PC-3 (cell line): ENCODE measurements at regions of chr5 and their contacts with region 1.

Region 1: GRCh38 chr5:12016159-12016746 is 112.0 kb upstream of the CTNND2 start:
- DNase-seq: peak; percentile 47
- ATAC-seq: peak; percentile 67
- H3K4me3 ChIP-seq: no peak overlapping the region
- H3K27ac ChIP-seq: no peak overlapping the region
- H3K4me1 ChIP-seq: no peaks in the 10 kb centered on the region
- H3K27me3 ChIP-seq: no peaks in the 10 kb centered on the region
- CTCF ChIP-seq: no peak

Region 2: GRCh38 chr5:11153670-11154377 is 862.4 kb before region 1 on chr5:
- CTCF ChIA-PET with region 1: no interaction called
- POLR2A ChIA-PET with region 1: no interaction called
- intact Hi-C with region 1: no loop called
- DNase-seq: no peak
- ATAC-seq: no peak
- H3K4me3 ChIP-seq: no peak overlapping the region
- H3K27ac ChIP-seq: no peak overlapping the region
- H3K4me1 ChIP-seq: no peaks in the 10 kb centered on the region
- H3K27me3 ChIP-seq: peaks cover 41% of the 10 kb centered on the region
- CTCF ChIP-seq: no peak

Region 3: GRCh38 chr5:11757661-11758060 is 258.6 kb before region 1 on chr5:
- CTCF ChIA-PET with region 1: no interaction called
- POLR2A ChIA-PET with region 1: no interaction called
- intact Hi-C with region 1: loop called (anchors 10 kb)
- DNase-seq: no peak
- ATAC-seq: no peak
- H3K4me3 ChIP-seq: no peak overlapping the region
- H3K27ac ChIP-seq: no peak overlapping the region
- H3K4me1 ChIP-seq: no peaks in the 10 kb centered on the region
- H3K27me3 ChIP-seq: no peaks in the 10 kb centered on the region
- CTCF ChIP-seq: no peak

Region 4: GRCh38 chr5:12075302-12075701 is 59.0 kb after region 1 on chr5:
- CTCF ChIA-PET with region 1: no interaction called
- POLR2A ChIA-PET with region 1: no interaction called
- intact Hi-C with region 1: no loop called
- DNase-seq: peak; percentile 44
- ATAC-seq: peak; percentile 29; the same call in 1 of the 2 replicates
- H3K4me3 ChIP-seq: no peak overlapping the region
- H3K27ac ChIP-seq: no peak overlapping the region
- H3K4me1 ChIP-seq: 0 out of 2 replicates have a peak, but pooled peaks cover 6% of the 10 kb centered on the region
- H3K27me3 ChIP-seq: no peaks in the 10 kb centered on the region
- CTCF ChIP-seq: no peak

Region 5: GRCh38 chr5:12147513-12147912 is 131.3 kb after region 1 on chr5:
- CTCF ChIA-PET with region 1: no interaction called
- POLR2A ChIA-PET with region 1: no interaction called
- intact Hi-C with region 1: no loop called
- DNase-seq: no peak
- ATAC-seq: no peak
- H3K4me3 ChIP-seq: no peak overlapping the region
- H3K27ac ChIP-seq: no peak overlapping the region
- H3K4me1 ChIP-seq: no peaks in the 10 kb centered on the region
- H3K27me3 ChIP-seq: no peaks in the 10 kb centered on the region
- CTCF ChIP-seq: no peak

Region 6: DNA sequence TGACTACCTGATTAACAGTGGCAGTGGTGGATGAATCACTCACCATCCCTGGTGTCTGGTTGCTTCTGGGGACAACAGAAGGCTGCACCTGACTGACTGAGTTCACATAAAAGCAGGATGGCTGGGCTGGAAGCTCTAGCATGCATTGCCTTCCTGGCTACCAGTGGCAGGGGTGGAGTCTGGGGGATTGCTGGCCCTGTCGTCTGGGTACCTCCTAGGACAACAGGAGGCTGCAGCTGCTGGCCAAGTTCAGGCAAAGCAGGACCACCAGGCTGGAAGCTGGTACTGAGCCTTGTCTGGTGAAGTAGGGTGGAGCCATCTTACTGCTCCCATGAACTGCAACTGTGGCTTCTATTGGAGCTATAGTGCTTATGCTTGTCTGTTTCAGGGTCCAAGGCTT is 368.8 kb after region 1 on chr5:
- CTCF ChIA-PET with region 1: no interaction called
- POLR2A ChIA-PET with region 1: no interaction called
- intact Hi-C with region 1: no loop called
- DNase-seq: peak; percentile 8
- ATAC-seq: no peak
- H3K4me3 ChIP-seq: no peak overlapping the region
- H3K27ac ChIP-seq: no peak overlapping the region
- H3K4me1 ChIP-seq: no peaks in the 10 kb centered on the region
- H3K27me3 ChIP-seq: no peaks in the 10 kb centered on the region
- CTCF ChIP-seq: no peak